ENCODE measurements at regions of chr11 and their contacts with region 1.

Region 1: GRCh38 chr11:65888163-65888814 is at the start of gene FIBP:
- DNase-seq: peak; percentile 97
- ATAC-seq: peak; percentile 43 to 73
- H3K4me3 ChIP-seq: peak within 1 kb of the TSS; percentile 72
- H3K27ac ChIP-seq: peak within 1 kb of the TSS; percentile 93 to 96
- H3K4me1 ChIP-seq: peaks cover 50% of the 10 kb centered on the region
- CTCF ChIP-seq: peak; percentile 81
- EP300 ChIP-seq: no peak
- POLR2A ChIP-seq: peak; percentile 91
- RAD21 ChIP-seq: peak; percentile 45 to 61
- polyA plus RNA-seq, gene FIBP: 72.2 and 83.0 TPM in 2 replicates

Region 2: DNA sequence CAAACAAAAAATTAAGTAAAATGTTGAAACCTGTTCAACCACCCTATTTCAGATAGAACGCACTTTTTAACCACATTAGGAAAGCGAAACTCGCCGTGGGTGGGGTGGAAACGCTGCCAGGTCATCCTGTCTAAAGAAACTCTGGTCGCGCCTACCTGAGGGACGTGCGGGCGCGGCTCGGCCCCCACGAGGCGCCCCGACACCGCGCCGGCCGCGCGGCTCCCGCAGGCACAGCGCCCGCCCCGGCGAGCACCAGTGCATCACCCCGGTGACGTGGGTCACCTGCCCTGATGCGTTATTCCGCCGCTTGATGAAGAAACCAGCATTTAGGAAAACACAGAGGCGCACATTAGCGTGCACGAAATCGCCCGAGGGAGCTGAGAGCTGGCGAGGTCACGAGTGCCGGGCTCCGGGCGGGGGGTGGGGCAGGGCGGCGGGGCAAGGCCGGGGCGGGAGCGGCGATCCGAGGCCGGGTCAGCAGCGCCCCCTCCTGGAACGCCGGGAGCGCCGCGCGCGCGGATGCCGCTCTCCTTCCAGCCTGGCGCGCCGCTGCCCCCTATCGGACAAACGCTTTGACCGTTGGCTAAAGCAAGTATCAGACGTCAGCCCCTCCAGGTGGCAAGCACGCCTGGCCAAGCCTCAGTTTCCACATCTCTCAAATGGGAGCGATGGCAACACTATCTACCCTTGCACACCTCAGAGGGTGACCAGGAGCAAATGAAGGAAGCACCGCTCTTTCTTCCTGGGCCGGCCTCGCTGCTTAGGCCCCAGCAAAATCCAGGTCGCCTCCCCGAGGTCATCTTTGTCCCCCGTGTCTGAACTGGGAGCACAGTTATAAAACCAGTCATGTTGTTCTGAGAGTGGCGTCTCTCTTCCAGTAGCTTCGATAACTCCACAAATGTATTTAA is 70.2 kb before region 1 on chr11:
- CTCF ChIA-PET with region 1: interaction called, 12 read pairs
- POLR2A ChIA-PET with region 1: no interaction called
- DNase-seq: peak; percentile 81 to 88
- ATAC-seq: peak; percentile 91 to 93
- H3K4me3 ChIP-seq: peak overlapping the region; percentile 57
- H3K27ac ChIP-seq: peak overlapping the region; percentile 82 to 89
- H3K4me1 ChIP-seq: peaks cover 6% of the 10 kb centered on the region; the same call in 1 of the 3 replicates
- CTCF ChIP-seq: peak; percentile 100
- EP300 ChIP-seq: no peak; a peak in 1 of 5 replicates
- POLR2A ChIP-seq: peak; percentile 50
- RAD21 ChIP-seq: peak; percentile 87 to 99

Region 3: GRCh38 chr11:65868076-65868667 is 20.1 kb before region 1 on chr11:
- CTCF ChIA-PET with region 1: interaction called, 195 read pairs
- POLR2A ChIA-PET with region 1: interaction called, 9 read pairs
- DNase-seq: no peak
- ATAC-seq: 0 out of 6 replicates have a peak, but pooled peaks of 1 of the 2 experiments have one; percentile 4
- H3K4me3 ChIP-seq: no peak overlapping the region
- H3K27ac ChIP-seq: no peak overlapping the region
- H3K4me1 ChIP-seq: peaks cover 6% of the 10 kb centered on the region
- CTCF ChIP-seq: no peak
- EP300 ChIP-seq: no peak
- POLR2A ChIP-seq: no peak
- RAD21 ChIP-seq: no peak

Region 4: DNA sequence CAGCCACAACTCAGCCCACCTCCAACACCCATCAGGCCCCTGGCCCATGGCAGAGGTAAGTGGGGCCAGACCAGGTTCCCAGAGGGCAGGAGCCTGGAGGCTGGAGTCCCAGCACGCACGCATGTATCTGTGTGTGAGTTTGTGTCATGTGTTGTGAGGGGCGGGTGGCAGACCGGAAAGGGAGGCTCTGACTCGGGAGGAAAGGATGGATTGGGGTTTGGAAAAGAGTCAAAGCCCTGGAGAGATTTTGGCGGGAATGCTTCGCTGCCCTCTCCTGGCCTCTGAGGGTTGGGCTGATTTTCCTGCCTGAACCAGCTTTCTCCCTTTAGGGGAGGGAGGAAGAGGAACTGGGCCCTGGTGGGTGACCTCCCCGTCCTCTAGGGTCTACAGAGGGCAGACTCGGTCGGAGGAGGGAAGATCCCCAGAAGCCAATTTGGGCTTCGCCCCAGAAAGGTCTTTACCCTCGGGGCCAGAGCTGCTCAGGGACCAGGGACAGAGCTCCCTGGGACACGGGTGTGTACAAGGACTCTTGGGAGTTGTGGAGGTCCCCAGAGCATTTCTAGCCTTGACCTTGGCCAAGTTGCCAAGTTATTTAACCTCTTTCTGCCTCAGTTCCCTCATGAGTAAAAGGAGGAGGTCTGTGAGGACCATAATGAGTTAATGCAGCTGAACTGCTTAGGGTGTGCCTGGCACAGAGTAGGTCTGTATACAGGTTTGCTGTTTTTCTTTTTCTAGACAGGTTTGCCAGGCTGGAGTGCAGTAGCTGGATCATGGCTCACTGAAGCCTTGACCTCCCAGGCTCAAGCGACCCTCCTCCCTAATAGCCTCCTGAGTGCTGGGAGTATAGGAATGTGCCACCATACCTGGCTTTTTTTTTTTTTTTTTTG is 23.6 kb after region 1 on chr11:
- CTCF ChIA-PET with region 1: interaction called, 618 read pairs
- POLR2A ChIA-PET with region 1: interaction called, 15 read pairs
- DNase-seq: peak; percentile 68 to 79
- ATAC-seq: peak; percentile 7 to 24; a peak in 3 of 6 replicates
- H3K4me3 ChIP-seq: no peak overlapping the region
- H3K27ac ChIP-seq: peak overlapping the region; percentile 51 to 100
- H3K4me1 ChIP-seq: peaks cover 61% of the 10 kb centered on the region
- CTCF ChIP-seq: peak; percentile 43; the same call in 2 of the 3 replicates
- EP300 ChIP-seq: no peak
- POLR2A ChIP-seq: no peak
- RAD21 ChIP-seq: peak; percentile 38 to 54; a peak in 4 of 5 replicates

Region 5: DNA sequence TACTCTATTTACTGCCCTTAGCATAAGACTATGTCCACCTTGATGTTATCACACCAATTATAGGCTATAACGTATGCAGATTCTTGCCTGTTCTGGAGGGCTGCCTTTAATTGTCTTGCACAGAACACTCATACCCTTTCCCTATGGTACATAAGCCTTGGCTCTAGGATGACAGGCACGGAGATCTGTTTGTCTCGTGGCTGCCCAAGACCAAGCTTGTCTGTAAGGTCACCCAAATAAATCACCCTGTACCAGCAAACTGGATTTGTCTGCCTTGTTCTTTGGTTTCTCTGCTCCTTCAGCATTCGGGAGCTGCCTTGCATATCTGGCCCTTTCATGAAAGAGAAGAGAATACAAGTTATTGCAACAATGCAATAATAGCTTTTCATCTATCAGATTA is 49.5 kb after region 1 on chr11:
- CTCF ChIA-PET with region 1: interaction called, 20 read pairs
- POLR2A ChIA-PET with region 1: interaction called, 3 read pairs
- DNase-seq: no peak
- ATAC-seq: no peak
- H3K4me3 ChIP-seq: no peak overlapping the region
- H3K27ac ChIP-seq: no peak overlapping the region
- H3K4me1 ChIP-seq: peaks cover 3% of the 10 kb centered on the region; the same call in 1 of the 3 replicates
- CTCF ChIP-seq: no peak
- EP300 ChIP-seq: no peak
- POLR2A ChIP-seq: no peak
- RAD21 ChIP-seq: no peak

Region 6: GRCh38 chr11:65968600-65969482 is 80.6 kb after region 1 on chr11:
- CTCF ChIA-PET with region 1: interaction called, 35 read pairs
- POLR2A ChIA-PET with region 1: no interaction called
- DNase-seq: no peak
- ATAC-seq: peak; percentile 37 to 56; a peak in 3 of 6 replicates
- H3K4me3 ChIP-seq: no peak overlapping the region
- H3K27ac ChIP-seq: no peak overlapping the region
- H3K4me1 ChIP-seq: no peaks in the 10 kb centered on the region; the same call in 2 of the 3 replicates
- CTCF ChIP-seq: no peak
- EP300 ChIP-seq: no peak
- POLR2A ChIP-seq: no peak
- RAD21 ChIP-seq: no peak

Region 7: GRCh38 chr11:66022401-66023185 is 134.3 kb after region 1 on chr11:
- CTCF ChIA-PET with region 1: interaction called, 17 read pairs
- POLR2A ChIA-PET with region 1: interaction called, 4 read pairs
- DNase-seq: peak; percentile 72 to 82
- ATAC-seq: peak; percentile 78 to 92
- H3K4me3 ChIP-seq: peak overlapping the region; percentile 33
- H3K27ac ChIP-seq: peak overlapping the region; percentile 50 to 77
- H3K4me1 ChIP-seq: peaks cover 12% of the 10 kb centered on the region
- CTCF ChIP-seq: peak; percentile 84
- EP300 ChIP-seq: no peak
- POLR2A ChIP-seq: no peak
- RAD21 ChIP-seq: peak; percentile 72 to 75

Measured in A549 (cell line).